PC-3 (cell line): ENCODE measurements at regions of chr19 and their contacts with region 1.

Region 1: GRCh38 chr19:18058208-18059030 is 28.3 kb downstream of the IL12RB1 start:
- DNase-seq: peak; percentile 80
- ATAC-seq: peak; percentile 81
- H3K4me3 ChIP-seq: peak overlapping the region; percentile 44; the same call in 1 of the 2 replicates
- H3K27ac ChIP-seq: no peak overlapping the region
- H3K4me1 ChIP-seq: peaks cover 8% of the 10 kb centered on the region
- H3K27me3 ChIP-seq: no peaks in the 10 kb centered on the region
- CTCF ChIP-seq: peak; percentile 93

Region 2: DNA sequence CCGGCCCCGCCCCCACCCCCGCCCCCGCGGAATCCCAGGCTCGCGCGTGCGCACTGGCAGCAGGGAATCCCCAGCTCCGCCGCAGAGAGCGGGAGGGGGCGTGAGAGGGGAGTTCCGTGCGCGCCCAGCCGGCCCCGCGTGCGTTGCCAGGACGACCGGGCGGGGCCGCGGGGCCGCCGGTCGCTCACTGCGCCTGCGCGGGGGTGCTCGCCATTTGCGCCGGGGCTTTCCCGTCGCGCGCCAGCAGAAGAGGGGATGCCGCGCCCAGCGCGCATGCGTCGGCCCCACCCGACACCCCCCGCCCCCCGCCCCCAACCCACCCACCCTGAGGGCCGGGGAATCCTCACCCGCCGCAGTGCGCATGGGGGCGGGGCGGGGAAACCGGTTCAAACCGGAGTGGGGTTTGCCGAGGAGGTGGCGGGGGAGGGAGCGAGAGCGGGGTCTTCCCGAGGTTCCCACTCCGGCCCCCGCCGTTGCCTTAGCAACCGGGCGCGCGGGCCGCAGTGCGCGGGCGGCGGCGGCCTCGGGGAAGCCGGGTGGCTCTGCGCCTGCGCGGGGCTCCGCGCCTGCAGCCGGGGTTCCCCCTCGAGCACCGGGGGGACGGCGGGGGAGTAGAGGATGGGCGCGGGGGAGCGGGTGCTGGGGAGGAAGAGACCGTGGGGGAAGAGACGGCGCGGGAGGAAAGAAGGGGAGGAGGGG is 110.5 kb before region 1 on chr19:
- CTCF ChIA-PET with region 1: no interaction called
- POLR2A ChIA-PET with region 1: no interaction called
- intact Hi-C with region 1: loop called (anchors 5 kb)
- DNase-seq: peak; percentile 95
- ATAC-seq: peak; percentile 33
- H3K4me3 ChIP-seq: peak overlapping the region; percentile 66
- H3K27ac ChIP-seq: no peak overlapping the region
- H3K4me1 ChIP-seq: peaks cover 37% of the 10 kb centered on the region
- H3K27me3 ChIP-seq: peaks cover 37% of the 10 kb centered on the region
- CTCF ChIP-seq: no peak

Region 3: GRCh38 chr19:18007044-18007916 is 51.1 kb before region 1 on chr19:
- CTCF ChIA-PET with region 1: no interaction called
- POLR2A ChIA-PET with region 1: no interaction called
- intact Hi-C with region 1: loop called (anchors 1 kb)
- DNase-seq: peak; percentile 92
- ATAC-seq: peak; percentile 81
- H3K4me3 ChIP-seq: peak overlapping the region; percentile 65
- H3K27ac ChIP-seq: no peak overlapping the region; the same call in 1 of the 2 replicates
- H3K4me1 ChIP-seq: peaks cover 26% of the 10 kb centered on the region
- H3K27me3 ChIP-seq: no peaks in the 10 kb centered on the region
- CTCF ChIP-seq: peak; percentile 97